Breast epithelium (tissue), 4 donors: ENCODE measurements at regions of chr5 and their contacts with region 1.

Region 1: GRCh38 chr5:31407921-31408693 is 123.8 kb downstream of the DROSHA start:
- DNase-seq: no peak
- H3K4me3 ChIP-seq: no peak overlapping the region
- H3K27ac ChIP-seq: no peak overlapping the region
- H3K4me1 ChIP-seq: no peaks in the 10 kb centered on the region
- H3K27me3 ChIP-seq: no peaks in the 10 kb centered on the region
- CTCF ChIP-seq: no peak
- POLR2A ChIP-seq: no peak

Region 2: DNA sequence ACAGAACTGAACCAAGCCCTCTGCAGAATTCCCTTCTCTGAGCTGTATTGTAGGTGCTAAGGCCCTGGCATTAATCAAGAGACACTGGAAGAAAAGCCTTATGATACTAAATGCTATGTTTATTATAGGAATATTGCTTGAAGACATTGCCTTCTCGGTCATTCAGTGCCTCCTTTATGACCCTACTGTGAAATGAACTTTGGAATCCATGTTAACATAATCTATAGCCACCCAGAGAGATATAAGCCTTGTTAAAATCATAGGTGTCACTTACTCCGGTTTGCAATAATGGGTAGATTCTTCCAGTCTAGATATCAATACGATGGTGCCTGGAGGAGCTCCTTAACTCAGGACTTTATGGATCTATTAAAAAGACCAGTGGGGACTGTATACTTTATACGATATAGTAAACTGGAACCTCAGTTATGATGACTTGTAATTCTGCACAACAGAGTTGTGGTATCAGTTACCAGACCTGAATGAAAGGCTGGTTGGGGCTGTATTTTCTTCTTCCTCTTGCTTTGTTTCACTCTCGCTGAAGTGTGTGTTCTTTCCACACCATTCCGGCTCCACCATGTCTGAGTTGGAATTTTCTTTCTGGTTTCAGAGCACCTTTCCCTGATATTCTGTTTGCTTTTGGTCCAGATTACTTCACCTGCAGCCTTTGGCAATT is 30.7 kb before region 1 on chr5:
- intact Hi-C with region 1: no loop called
- DNase-seq: no peak
- H3K4me3 ChIP-seq: no peak overlapping the region
- H3K27ac ChIP-seq: no peak overlapping the region
- H3K4me1 ChIP-seq: no peaks in the 10 kb centered on the region
- H3K27me3 ChIP-seq: no peaks in the 10 kb centered on the region
- CTCF ChIP-seq: no peak
- POLR2A ChIP-seq: no peak

Region 3: DNA sequence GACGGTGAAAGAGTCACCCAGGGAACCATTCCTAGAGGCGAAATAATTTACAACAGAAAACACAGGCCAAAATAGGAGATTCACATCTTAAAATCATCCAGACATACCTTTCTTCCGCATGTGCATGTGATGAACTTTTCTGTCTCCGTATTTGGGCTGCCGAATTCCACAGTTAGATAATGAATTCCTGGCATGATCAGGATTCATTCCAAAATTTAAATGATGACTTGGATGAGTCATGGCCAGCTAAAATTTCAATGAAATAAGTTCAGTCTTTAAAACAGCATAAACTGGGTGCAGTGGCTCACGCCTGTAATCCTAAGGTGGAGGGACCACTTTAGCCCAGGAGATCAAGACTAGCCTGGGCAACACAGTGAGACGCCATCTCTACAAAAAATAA is 41.1 kb after region 1 on chr5:
- intact Hi-C with region 1: loop called (anchors 2 kb)
- DNase-seq: no peak
- H3K4me3 ChIP-seq: no peak overlapping the region
- H3K27ac ChIP-seq: no peak overlapping the region
- H3K4me1 ChIP-seq: no peaks in the 10 kb centered on the region
- H3K27me3 ChIP-seq: no peaks in the 10 kb centered on the region
- CTCF ChIP-seq: no peak
- POLR2A ChIP-seq: no peak